ENCODE measurements at regions of chr5 and their contacts with region 1.

Region 1: DNA sequence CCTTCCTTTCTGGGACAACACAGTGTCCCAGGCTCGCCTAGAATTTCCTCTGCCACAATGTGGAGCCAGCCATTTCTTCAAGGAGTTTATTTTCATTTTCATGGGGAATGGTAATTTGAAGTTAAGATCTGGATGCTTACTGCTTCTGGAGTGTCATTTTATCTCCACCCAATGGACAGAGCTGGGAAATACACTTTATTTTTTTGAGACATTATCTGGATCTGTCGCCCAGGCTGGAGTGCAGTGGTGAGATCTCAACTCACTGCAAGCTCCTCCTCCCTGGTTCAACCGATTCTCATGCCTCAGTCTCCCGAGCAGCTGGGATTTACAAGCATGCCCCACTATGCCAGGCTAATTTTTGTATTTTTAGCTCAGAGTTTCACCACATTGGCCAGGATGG is 12.7 kb upstream of the THG1L start:
- DNase-seq: no peak
- H3K4me3 Mint-ChIP-seq: no peak overlapping the region
- H3K27ac Mint-ChIP-seq: no peak overlapping the region
- H3K4me1 Mint-ChIP-seq: peaks cover 33% of the 10 kb centered on the region
- H3K27me3 Mint-ChIP-seq: no peaks in the 10 kb centered on the region

Region 2: DNA sequence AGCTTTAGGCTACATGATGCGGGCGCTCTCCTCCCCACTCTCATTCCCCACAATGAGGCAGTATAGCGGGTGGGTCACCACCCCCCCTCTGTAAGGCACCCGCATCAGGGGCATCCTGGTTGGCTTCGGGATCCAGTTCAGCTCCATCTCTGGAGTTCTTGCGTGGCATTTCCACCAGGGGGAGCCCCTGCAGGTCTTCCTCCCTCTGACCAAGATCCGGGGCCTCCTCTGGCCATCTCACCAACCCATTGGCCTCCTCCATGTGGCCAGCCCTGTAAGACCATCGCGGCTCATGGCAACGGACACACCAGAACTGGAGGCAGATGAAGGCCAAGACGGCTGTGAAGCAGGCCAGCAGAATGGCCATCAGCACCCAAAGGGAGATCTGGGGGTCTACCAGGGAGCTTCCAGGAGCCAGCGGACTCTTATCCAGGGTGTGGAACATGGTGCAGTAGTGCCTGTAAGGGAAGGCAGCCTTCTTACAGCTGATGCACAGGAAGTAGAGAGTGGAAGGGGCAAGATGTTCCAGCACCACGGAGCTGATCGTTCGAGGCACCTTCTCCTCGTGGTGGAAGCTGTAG is 375.6 kb before region 1 on chr5:
- CTCF ChIA-PET with region 1: interaction called, 17 read pairs
- POLR2A ChIA-PET with region 1: no interaction called
- DNase-seq: peak; percentile 34
- H3K4me3 Mint-ChIP-seq: no peak overlapping the region
- H3K27ac Mint-ChIP-seq: no peak overlapping the region
- H3K4me1 Mint-ChIP-seq: peaks cover 30% of the 10 kb centered on the region
- H3K27me3 Mint-ChIP-seq: no peaks in the 10 kb centered on the region

Region 3: DNA sequence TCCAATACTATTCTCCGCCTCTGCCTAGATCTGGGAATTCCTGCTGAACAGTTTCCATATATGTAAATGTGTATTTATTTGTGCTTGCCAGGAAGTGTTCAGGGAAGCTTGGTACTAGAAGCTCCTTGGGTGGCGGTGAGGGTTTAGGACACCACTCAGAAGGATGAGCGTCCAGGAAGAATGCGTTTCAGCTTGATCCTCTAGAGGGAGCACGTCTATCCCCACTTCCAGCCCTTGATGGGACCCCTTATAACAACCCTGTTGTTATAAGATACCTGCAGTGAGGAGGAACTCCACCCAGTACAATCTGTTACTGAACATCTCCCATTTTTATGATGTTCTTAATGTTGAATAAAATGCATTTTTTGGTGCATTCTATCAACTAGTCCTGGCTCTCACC is 363.7 kb before region 1 on chr5:
- CTCF ChIA-PET with region 1: no interaction called
- POLR2A ChIA-PET with region 1: no interaction called
- DNase-seq: no peak
- H3K4me3 Mint-ChIP-seq: no peak overlapping the region
- H3K27ac Mint-ChIP-seq: no peak overlapping the region
- H3K4me1 Mint-ChIP-seq: peaks cover 26% of the 10 kb centered on the region
- H3K27me3 Mint-ChIP-seq: no peaks in the 10 kb centered on the region

Region 4: DNA sequence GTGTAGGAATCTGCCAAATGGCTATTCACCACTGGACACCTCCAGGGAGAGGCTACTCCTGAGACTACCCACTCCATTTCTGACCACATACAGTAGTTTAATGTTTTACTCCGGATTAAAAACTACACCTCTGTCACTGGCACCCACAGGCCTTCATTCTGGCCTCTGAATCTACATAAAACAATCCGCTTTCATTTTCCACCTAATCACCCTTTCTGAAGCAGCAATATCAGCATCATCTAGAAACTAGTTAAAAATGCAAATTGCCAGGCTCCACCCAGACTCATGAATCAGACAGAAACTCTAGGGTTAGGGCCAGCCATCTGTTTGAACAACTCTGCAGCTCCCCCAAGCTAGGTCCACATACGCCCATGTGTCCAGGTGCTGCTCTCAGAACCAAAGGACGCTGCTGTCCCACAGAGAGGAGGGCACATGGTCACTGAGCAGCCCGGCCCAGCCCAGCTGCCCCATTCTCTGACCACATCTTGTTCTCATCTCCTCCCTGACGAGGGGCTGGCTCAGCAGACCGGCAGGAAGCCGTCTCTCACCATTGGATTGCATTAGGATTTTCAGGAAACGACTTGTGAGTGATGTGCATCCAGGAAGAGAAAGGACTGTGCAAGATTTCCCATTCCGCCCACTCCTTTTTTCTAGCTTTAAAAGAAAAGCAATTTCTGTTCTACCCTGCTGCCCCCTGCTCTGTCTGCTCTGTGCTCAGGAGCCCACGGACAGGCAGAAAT is 177.6 kb before region 1 on chr5:
- CTCF ChIA-PET with region 1: interaction called, 22 read pairs
- POLR2A ChIA-PET with region 1: interaction called, 5 read pairs
- DNase-seq: peak; percentile 75
- H3K4me3 Mint-ChIP-seq: peak overlapping the region; percentile 67
- H3K27ac Mint-ChIP-seq: peak overlapping the region; percentile 89
- H3K4me1 Mint-ChIP-seq: peaks cover 96% of the 10 kb centered on the region
- H3K27me3 Mint-ChIP-seq: no peaks in the 10 kb centered on the region

Region 5: DNA sequence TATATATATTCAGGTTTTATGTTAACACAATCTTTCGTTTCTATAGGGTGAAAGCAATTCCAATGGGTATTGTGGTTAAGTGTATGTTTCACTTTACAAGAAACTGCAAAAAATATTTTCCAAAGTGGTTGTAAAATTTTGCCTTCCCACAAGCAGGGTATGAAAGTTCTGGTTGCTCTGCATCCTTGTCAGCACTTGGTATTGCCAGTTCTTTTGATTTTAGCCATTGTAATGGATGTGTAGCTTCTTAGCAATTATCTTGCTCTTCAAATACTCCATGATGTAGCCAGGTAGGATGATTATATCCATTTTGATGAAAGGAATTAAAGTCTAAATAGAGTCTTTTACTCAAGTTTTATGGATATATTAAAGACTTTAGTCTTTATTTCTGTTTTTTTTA is 133.9 kb before region 1 on chr5:
- CTCF ChIA-PET with region 1: no interaction called
- POLR2A ChIA-PET with region 1: no interaction called
- DNase-seq: no peak
- H3K4me3 Mint-ChIP-seq: no peak overlapping the region
- H3K27ac Mint-ChIP-seq: no peak overlapping the region
- H3K4me1 Mint-ChIP-seq: peaks cover 39% of the 10 kb centered on the region
- H3K27me3 Mint-ChIP-seq: no peaks in the 10 kb centered on the region

Region 6: GRCh38 chr5:157670662-157671591 is 47.6 kb before region 1 on chr5 and contains the start of gene C5orf52:
- CTCF ChIA-PET with region 1: interaction called, 20 read pairs
- POLR2A ChIA-PET with region 1: interaction called, 5 read pairs
- DNase-seq: peak; percentile 27
- H3K4me3 Mint-ChIP-seq: peak within 1 kb of the TSS; percentile 88
- H3K27ac Mint-ChIP-seq: peak within 1 kb of the TSS; percentile 27
- H3K4me1 Mint-ChIP-seq: peaks cover 25% of the 10 kb centered on the region
- H3K27me3 Mint-ChIP-seq: peaks cover 29% of the 10 kb centered on the region
- total RNA-seq, gene C5orf52: not detected

Region 7: DNA sequence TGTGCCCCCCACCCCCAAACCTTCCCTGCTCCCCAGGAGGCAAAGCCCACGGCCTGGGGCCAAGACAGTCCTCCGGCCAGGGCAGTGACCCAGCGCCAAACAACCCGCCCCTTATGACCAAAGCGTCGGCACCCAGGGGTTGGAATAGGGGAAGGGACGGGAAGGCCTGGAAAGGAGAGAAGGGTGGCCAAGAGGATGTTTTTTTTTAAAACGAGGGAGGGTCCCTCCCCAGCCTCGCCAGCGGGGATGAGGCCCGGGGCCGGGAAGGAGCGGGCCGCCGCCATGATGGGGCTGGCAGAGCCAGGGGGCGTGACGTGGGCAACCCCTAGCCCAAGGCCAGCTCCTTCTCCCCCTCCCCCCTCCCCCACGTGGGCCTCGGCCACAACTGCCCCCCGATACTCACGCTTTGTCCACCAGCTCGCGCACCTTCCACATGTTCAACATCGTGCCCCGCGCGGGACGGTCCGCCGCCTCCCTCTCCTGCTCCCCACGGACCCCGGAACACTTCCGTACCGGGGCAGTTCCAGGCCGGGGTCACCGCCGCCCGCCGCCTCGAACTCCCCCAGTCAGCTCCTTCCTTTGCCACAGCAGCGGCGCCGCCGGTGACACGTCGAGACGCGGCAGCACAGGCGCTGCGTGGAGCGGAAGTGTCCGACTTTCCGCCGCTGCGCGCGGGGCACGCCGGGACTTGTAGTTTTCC is 140.2 kb after region 1 on chr5 and contains the start of gene CLINT1:
- CTCF ChIA-PET with region 1: no interaction called
- POLR2A ChIA-PET with region 1: no interaction called
- DNase-seq: peak; percentile 92
- H3K4me3 Mint-ChIP-seq: peak within 1 kb of the TSS; percentile 90
- H3K27ac Mint-ChIP-seq: peak within 1 kb of the TSS; percentile 91
- H3K4me1 Mint-ChIP-seq: peaks cover 66% of the 10 kb centered on the region
- H3K27me3 Mint-ChIP-seq: no peaks in the 10 kb centered on the region
- total RNA-seq, gene CLINT1: 64.9 to 68.6 TPM